ENCODE measurements at regions of chr2 and their contacts with region 1.

Region 1: GRCh38 chr2:158745044-158745865 is 49.9 kb upstream of the DAPL1 start:
- DNase-seq: no peak
- ATAC-seq: peak; percentile 78
- H3K4me3 ChIP-seq: no peak overlapping the region
- H3K27ac ChIP-seq: no peak overlapping the region
- H3K4me1 ChIP-seq: no peaks in the 10 kb centered on the region
- H3K27me3 ChIP-seq: peaks cover 0 to 2% of the 10 kb centered on the region in 2 experiments; a peak in 1 of 4 replicates
- CTCF ChIP-seq: peak; percentile 53 to 60 (median 55)
- EP300 ChIP-seq: no peak
- POLR2A ChIP-seq: no peak
- RAD21 ChIP-seq: peak; percentile 82

Region 2: DNA sequence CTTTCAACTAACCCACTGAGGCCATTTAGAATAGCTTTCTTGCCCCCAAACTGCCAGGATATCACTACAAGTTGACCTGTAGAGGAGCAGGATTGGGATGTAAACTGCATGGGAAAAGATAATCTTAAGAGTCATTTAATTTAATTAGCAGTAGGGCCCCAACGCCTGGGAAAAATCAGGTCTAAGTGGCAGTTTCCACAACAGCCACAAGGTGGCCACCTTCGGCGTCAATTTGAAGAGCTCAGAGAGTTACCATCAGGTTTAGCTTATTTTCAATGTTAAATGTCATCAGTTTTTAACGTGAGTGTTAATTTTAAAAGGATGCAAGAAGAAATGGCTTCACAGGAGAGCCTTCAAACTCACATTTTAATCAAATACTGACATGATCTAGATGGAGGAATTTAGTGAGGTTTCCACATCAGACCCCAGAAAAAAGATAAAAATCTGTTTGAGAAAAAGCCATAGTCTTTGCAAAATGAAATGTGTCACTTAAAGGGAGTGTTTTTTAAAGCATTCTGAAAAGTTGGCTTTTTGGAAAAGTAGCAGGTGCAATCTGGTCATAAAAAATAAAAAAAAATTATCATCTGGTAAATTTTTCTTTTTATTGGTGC is 720.9 kb before region 1 on chr2:
- CTCF ChIA-PET with region 1: interaction called, 54 read pairs
- POLR2A ChIA-PET with region 1: no interaction called
- RAD21 ChIA-PET with region 1: interaction called, 33 read pairs
- SMC1A ChIA-PET with region 1: interaction called, 18 read pairs
- in situ Hi-C with region 1: no loop called
- intact Hi-C with region 1: loop called (anchors 2 kb)
- DNase-seq: no peak
- ATAC-seq: peak; percentile 86
- H3K4me3 ChIP-seq: no peak overlapping the region
- H3K27ac ChIP-seq: no peak overlapping the region
- H3K4me1 ChIP-seq: no peaks in the 10 kb centered on the region
- H3K27me3 ChIP-seq: no peaks in the 10 kb centered on the region
- CTCF ChIP-seq: peak; percentile 74 to 76 (median 75)
- EP300 ChIP-seq: no peak
- POLR2A ChIP-seq: no peak
- RAD21 ChIP-seq: peak; percentile 75

Region 3: DNA sequence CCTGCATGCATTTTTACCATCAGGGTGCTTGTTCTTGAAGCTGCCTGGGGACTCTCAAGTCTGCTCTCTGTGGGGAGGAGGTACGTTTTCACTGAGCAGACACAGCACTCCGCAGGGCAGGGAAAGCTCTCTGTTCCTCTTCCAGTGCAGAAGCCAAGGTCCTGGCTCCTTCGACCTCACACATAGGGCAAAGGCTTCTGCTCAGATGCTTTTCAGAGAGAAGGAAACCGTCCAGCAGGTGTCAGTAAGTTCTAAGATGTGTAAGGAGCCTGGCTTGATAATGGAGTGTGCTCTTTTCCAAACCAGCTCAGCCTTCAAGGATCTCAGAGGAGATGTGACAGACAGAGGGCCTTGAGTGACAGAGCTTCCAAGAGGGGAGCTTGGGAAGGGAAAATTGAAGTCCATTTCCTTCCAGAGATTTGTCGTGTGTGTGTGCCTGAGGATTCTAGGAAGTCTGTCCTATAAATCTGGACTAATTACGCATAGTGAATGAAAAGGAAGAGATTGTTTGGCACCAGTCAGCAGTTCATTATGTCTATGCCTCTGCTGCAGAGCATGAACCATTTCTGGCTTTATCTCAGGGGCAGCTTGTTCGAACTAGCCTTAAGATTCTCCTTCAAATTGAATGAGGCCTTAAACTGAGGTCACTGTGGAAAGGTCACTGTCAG is 710.9 kb before region 1 on chr2:
- CTCF ChIA-PET with region 1: interaction called, 22 read pairs
- POLR2A ChIA-PET with region 1: no interaction called
- RAD21 ChIA-PET with region 1: interaction called, 5 read pairs
- SMC1A ChIA-PET with region 1: interaction called, 5 read pairs
- in situ Hi-C with region 1: loop called (anchors 5 kb)
- intact Hi-C with region 1: no loop called
- DNase-seq: no peak
- ATAC-seq: peak; percentile 74
- H3K4me3 ChIP-seq: no peak overlapping the region
- H3K27ac ChIP-seq: no peak overlapping the region
- H3K4me1 ChIP-seq: no peaks in the 10 kb centered on the region
- H3K27me3 ChIP-seq: no peaks in the 10 kb centered on the region; a peak in 1 of 4 replicates
- CTCF ChIP-seq: peak; percentile 38 to 50 (median 43); a peak in 5 of 6 replicates
- EP300 ChIP-seq: no peak
- POLR2A ChIP-seq: no peak
- RAD21 ChIP-seq: peak; percentile 63

Region 4: DNA sequence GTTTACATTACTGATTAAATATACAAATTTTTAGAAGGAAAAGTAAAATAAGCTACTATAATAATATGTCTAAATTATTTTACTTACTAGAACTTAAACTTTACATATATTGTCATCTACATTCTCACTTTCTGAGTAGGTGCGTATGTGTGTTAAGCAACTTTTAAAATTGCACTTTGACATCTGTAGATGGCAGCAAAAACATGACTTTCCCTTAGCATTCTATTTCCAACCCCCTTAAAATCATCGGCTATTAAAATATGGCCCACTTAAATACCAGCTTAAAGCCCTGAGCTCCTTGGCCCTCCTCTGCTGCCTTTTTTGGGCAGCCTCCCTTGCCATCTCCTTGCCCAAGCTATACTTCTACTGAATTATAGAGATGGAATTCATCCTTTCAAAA is 565.6 kb before region 1 on chr2:
- CTCF ChIA-PET with region 1: interaction called, 37 read pairs
- POLR2A ChIA-PET with region 1: no interaction called
- RAD21 ChIA-PET with region 1: interaction called, 9 read pairs
- SMC1A ChIA-PET with region 1: interaction called, 11 read pairs
- in situ Hi-C with region 1: loop called (anchors 5 kb)
- intact Hi-C with region 1: loop called (anchors 2 kb)
- DNase-seq: no peak
- ATAC-seq: peak; percentile 65
- H3K4me3 ChIP-seq: no peak overlapping the region
- H3K27ac ChIP-seq: no peak overlapping the region
- H3K4me1 ChIP-seq: no peaks in the 10 kb centered on the region
- H3K27me3 ChIP-seq: no peaks in the 10 kb centered on the region; a peak in 1 of 4 replicates
- CTCF ChIP-seq: peak; percentile 14 to 46 (median 37); a peak in 5 of 6 replicates
- EP300 ChIP-seq: no peak
- POLR2A ChIP-seq: no peak
- RAD21 ChIP-seq: peak; percentile 69

Region 5: GRCh38 chr2:158716921-158717320 is 28.3 kb before region 1 on chr2:
- CTCF ChIA-PET with region 1: no interaction called
- POLR2A ChIA-PET with region 1: no interaction called
- RAD21 ChIA-PET with region 1: no interaction called
- SMC1A ChIA-PET with region 1: no interaction called
- in situ Hi-C with region 1: no loop called
- intact Hi-C with region 1: no loop called
- DNase-seq: no peak
- ATAC-seq: no peak
- H3K4me3 ChIP-seq: no peak overlapping the region
- H3K27ac ChIP-seq: no peak overlapping the region
- H3K4me1 ChIP-seq: no peaks in the 10 kb centered on the region
- H3K27me3 ChIP-seq: no peaks in the 10 kb centered on the region
- CTCF ChIP-seq: no peak
- EP300 ChIP-seq: no peak
- POLR2A ChIP-seq: no peak
- RAD21 ChIP-seq: no peak

Measured in GM12878 (cell line).